Right cardiac atrium (tissue), 5 donors: ENCODE measurements at regions of chr9 and their contacts with region 1.

Region 1: GRCh38 chr9:136494531-136495215 is 11.8 kb upstream of the SEC16A start:
- DNase-seq: peak in 1 of 3 donors; percentile 84
- ATAC-seq: no peak
- H3K4me3 ChIP-seq: no peak overlapping the region
- H3K27ac ChIP-seq: no peak overlapping the region
- H3K4me1 ChIP-seq: peaks cover 5% of the 10 kb centered on the region
- H3K27me3 ChIP-seq: no peaks in the 10 kb centered on the region

Region 2: GRCh38 chr9:135783540-135784245 is 711.0 kb before region 1 on chr9:
- intact Hi-C with region 1: no loop called
- DNase-seq: no peak
- ATAC-seq: no peak
- H3K4me3 ChIP-seq: no peak overlapping the region
- H3K27ac ChIP-seq: no peak overlapping the region
- H3K4me1 ChIP-seq: no peaks in the 10 kb centered on the region
- H3K27me3 ChIP-seq: no peaks in the 10 kb centered on the region

Region 3: GRCh38 chr9:136311051-136312008 is 183.3 kb before region 1 on chr9:
- intact Hi-C with region 1: no loop called
- DNase-seq: peak; percentile 7 to 46 (median 30)
- ATAC-seq: peak; percentile 10 to 11
- H3K4me3 ChIP-seq: no peak overlapping the region
- H3K27ac ChIP-seq: no peak overlapping the region
- H3K4me1 ChIP-seq: no peaks in the 10 kb centered on the region
- H3K27me3 ChIP-seq: no peaks in the 10 kb centered on the region

Region 4: GRCh38 chr9:136705564-136705963 is 210.9 kb after region 1 on chr9:
- intact Hi-C with region 1: loop called in 1 of 4 experiments (anchors 5 kb)
- DNase-seq: no peak
- ATAC-seq: no peak
- H3K4me3 ChIP-seq: no peak overlapping the region
- H3K27ac ChIP-seq: no peak overlapping the region
- H3K4me1 ChIP-seq: no peaks in the 10 kb centered on the region
- H3K27me3 ChIP-seq: no peaks in the 10 kb centered on the region

Region 5: DNA sequence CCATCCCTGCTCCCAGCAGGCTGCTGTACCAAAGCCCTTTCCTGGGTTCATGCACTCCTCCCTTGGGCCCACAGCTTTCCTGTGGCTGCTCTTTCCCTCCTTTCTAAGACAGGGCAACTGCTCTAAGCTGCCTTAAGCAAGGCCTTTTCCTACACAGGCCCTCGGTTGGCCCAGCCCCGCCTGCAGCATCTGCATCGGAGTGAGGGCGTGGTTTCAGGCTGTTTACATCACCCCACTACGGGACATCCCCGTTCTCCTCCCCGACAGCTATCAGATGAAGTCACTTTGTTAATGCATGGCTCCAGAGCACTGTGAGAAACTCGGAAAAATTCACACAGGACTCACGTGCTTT is 1080.7 kb after region 1 on chr9:
- intact Hi-C with region 1: no loop called
- DNase-seq: no peak
- ATAC-seq: no peak
- H3K4me3 ChIP-seq: no peak overlapping the region
- H3K27ac ChIP-seq: peak overlapping the region; percentile 26
- H3K4me1 ChIP-seq: peaks cover 5% of the 10 kb centered on the region
- H3K27me3 ChIP-seq: no peaks in the 10 kb centered on the region